Activated naive CD4-positive, alpha-beta T cell treated with anti-CD3 and anti-CD28 coated beads for 36 hours (primary cell): ENCODE measurements at regions of chr18 and their contacts with region 1.

Region 1: GRCh38 chr18:48161191-48161910 is 230.9 kb upstream of the SMAD2 start:
- DNase-seq: peak; percentile 62
- H3K4me3 Mint-ChIP-seq: peak overlapping the region; percentile 59
- H3K27ac Mint-ChIP-seq: no peak overlapping the region
- H3K4me1 Mint-ChIP-seq: no peaks in the 10 kb centered on the region
- H3K27me3 Mint-ChIP-seq: peaks cover 21% of the 10 kb centered on the region

Region 2: DNA sequence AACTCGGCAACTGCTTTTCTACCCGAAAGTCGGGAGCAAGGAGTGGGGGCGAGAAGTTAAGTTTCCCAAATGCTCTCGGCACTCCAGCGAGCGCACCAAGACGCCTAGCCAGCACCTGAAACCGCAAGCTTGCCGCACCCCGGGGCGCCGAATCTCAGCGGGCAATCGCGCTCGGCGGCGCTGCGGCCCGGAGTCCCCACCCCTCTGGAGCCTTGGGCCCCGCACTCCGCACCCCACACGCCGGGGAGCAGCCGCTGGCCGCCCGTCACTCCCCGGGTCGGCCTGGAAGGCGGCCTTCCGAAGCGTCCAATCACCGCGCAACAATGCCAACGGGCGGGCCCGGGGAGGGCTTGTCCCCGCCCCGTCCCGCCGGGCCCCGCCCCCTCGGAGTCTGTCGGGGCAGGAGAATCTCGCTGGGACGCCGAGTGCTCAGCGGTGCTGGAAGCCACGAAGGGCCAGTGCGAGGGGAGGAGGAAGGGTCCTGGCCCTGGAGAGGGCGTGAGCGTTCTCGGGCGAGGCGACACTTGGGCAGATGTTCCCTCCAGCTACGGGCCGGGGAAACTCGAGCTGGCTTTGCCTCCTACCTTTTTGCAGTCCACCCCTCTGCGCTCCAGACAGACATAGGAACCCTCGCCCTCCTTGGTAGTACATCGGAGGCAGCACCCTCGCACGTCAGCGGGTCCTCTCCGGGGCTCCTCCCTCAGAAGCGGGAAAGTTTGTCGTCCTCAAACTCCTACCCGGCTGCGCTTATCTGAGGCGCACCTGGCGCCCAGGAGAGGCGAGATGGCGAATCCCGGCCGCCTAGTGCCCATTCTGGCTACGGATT is 249.0 kb after region 1 on chr18:
- CTCF ChIA-PET with region 1: no interaction called
- intact Hi-C with region 1: loop called (anchors 10 kb)
- DNase-seq: peak; percentile 77
- H3K4me3 Mint-ChIP-seq: peak overlapping the region; percentile 54
- H3K27ac Mint-ChIP-seq: no peak overlapping the region
- H3K4me1 Mint-ChIP-seq: peaks cover 10% of the 10 kb centered on the region
- H3K27me3 Mint-ChIP-seq: peaks cover 62% of the 10 kb centered on the region